Naive thymus-derived CD8-positive, alpha-beta T cell (primary cell): ENCODE measurements at regions of chr19 and their contacts with region 1.

Region 1: GRCh38 chr19:55339048-55339888 is at the start of gene KMT5C:
- DNase-seq: peak; percentile 98 to 100 (median 100)
- ATAC-seq: peak; percentile 78 to 85
- H3K4me3 Mint-ChIP-seq: peak within 1 kb of the TSS; percentile 83 to 99 (median 94)
- H3K27ac Mint-ChIP-seq: peak within 1 kb of the TSS; percentile 89 to 99 (median 97)
- H3K4me1 Mint-ChIP-seq: peaks cover 12 to 34% (median 23%) of the 10 kb centered on the region in 4 donors
- H3K27me3 Mint-ChIP-seq: peaks cover 0 to 15% (median 0%) of the 10 kb centered on the region in 5 donors
- polyA plus RNA-seq, gene KMT5C: 1.7 to 2.5 (median 2.1) TPM

Region 2: GRCh38 chr19:55258828-55259539 is 80.3 kb before region 1 on chr19 and contains the start of gene PPP6R1:
- POLR2A ChIA-PET with region 1: interaction called, 24 read pairs
- DNase-seq: peak; percentile 88 to 99 (median 94)
- ATAC-seq: peak; percentile 77 to 81
- H3K4me3 Mint-ChIP-seq: peak within 1 kb of the TSS; percentile 95 to 99 (median 98)
- H3K27ac Mint-ChIP-seq: peak within 1 kb of the TSS; percentile 98 to 100 (median 99)
- H3K4me1 Mint-ChIP-seq: peaks cover 20 to 51% (median 43%) of the 10 kb centered on the region in 4 donors
- H3K27me3 Mint-ChIP-seq: no peaks in the 10 kb centered on the region
- polyA plus RNA-seq, gene PPP6R1: 57.3 to 131 (median 60.9) TPM

Region 3: DNA sequence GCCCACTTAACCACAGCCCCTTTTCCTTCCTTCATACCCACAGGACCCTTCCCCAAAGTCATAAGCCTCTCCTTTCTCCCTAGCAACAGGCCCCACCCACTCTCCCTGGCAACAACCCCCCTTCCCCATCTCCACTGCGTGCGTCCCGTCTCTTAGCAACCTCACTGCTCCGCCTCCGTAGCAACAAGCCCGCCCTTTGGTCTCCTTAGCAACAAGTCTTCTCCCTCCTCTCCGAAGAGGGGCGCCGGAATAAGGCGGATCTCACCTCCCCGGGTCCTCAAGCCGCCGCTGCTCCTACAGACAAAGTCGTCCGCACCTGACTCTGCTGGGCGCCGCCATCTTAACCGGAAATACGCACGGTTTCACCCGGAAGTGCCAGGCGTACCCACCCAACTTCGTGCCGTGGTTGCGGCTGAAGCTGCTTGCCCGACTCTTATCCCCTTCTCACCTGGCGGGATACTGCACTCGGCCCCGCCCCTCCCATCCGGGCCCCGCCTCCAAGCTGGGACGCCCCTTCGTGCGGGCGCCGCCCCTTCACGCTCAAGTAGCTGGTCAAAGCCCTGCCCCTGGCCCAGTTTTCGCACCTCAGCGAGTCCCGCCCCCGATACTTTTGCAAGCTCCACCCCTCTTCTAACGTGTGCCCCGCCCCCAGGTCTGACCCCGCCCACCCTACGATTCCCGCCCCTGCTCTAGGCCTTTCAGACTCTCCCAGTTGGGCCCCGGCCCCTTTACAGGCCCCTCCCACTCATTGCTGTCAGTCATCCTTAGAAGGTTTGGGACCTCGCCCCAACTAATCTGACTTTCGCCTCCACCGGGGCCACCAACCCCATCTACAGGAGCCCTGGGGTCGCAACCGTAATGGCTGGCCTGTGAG is 59.3 kb before region 1 on chr19 and contains the start of gene HSPBP1:
- POLR2A ChIA-PET with region 1: interaction called, 20 read pairs
- DNase-seq: peak; percentile 91 to 97 (median 96)
- ATAC-seq: peak; percentile 88 to 89
- H3K4me3 Mint-ChIP-seq: peak within 1 kb of the TSS; percentile 96 to 100 (median 99)
- H3K27ac Mint-ChIP-seq: peak within 1 kb of the TSS; percentile 96 to 100 (median 99)
- H3K4me1 Mint-ChIP-seq: peaks cover 17 to 59% (median 39%) of the 10 kb centered on the region in 4 donors
- H3K27me3 Mint-ChIP-seq: no peaks in the 10 kb centered on the region
- polyA plus RNA-seq, gene HSPBP1: 38.6 to 44.8 (median 42.5) TPM

Region 4: GRCh38 chr19:55301459-55302317 is 37.6 kb before region 1 on chr19:
- POLR2A ChIA-PET with region 1: interaction called, 10 read pairs
- DNase-seq: peak; percentile 91 to 99 (median 94)
- ATAC-seq: peak; percentile 92 to 94
- H3K4me3 Mint-ChIP-seq: peak overlapping the region; percentile 84 to 95 (median 90)
- H3K27ac Mint-ChIP-seq: peak overlapping the region; percentile 73 to 96 (median 92)
- H3K4me1 Mint-ChIP-seq: peaks cover 5 to 14% (median 11%) of the 10 kb centered on the region in 4 donors
- H3K27me3 Mint-ChIP-seq: peaks cover 0 to 3% (median 0%) of the 10 kb centered on the region in 5 donors

Region 5: DNA sequence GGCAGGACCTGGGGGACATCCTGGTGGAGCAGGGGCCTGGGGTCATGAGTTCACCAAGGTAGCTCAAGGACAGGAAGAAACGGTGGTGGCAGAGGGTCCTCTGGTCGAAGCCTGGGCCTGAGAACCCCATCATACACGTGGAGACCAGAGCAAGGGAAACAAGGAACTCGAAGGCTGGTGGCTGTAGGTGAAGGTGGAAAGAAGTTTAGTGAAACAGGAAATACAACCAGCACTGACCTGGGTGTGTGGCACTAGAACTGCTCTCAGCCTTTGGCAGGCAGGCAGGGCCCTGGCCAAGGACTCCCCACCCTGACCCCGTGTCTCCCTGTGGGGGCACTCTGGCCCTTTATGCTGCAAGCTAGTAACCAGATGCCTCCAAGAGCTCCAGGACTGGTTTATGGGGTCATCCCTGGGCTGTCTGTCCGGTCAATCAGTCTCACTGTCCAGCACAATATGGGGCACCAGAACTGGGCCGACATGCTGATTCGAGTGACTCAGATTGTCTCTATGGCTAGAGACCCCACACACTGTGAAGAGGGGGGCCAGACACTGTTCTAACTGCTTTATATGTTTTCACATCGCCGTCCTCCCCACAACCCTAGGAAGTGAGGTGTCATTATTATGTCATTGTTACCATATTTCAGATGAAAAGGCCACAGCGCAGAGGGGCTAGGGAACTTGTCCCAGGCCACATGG is 11.5 kb after region 1 on chr19:
- POLR2A ChIA-PET with region 1: interaction called, 10 read pairs
- DNase-seq: no peak
- ATAC-seq: no peak
- H3K4me3 Mint-ChIP-seq: peak overlapping the region in 5 of 10 donors; percentile 4 to 20 (median 9)
- H3K27ac Mint-ChIP-seq: peak overlapping the region in 2 of 10 donors; percentile 74 to 79
- H3K4me1 Mint-ChIP-seq: peaks cover 20 to 36% (median 25%) of the 10 kb centered on the region in 4 donors
- H3K27me3 Mint-ChIP-seq: peaks cover 3 to 44% (median 27%) of the 10 kb centered on the region in 5 donors

Region 6: DNA sequence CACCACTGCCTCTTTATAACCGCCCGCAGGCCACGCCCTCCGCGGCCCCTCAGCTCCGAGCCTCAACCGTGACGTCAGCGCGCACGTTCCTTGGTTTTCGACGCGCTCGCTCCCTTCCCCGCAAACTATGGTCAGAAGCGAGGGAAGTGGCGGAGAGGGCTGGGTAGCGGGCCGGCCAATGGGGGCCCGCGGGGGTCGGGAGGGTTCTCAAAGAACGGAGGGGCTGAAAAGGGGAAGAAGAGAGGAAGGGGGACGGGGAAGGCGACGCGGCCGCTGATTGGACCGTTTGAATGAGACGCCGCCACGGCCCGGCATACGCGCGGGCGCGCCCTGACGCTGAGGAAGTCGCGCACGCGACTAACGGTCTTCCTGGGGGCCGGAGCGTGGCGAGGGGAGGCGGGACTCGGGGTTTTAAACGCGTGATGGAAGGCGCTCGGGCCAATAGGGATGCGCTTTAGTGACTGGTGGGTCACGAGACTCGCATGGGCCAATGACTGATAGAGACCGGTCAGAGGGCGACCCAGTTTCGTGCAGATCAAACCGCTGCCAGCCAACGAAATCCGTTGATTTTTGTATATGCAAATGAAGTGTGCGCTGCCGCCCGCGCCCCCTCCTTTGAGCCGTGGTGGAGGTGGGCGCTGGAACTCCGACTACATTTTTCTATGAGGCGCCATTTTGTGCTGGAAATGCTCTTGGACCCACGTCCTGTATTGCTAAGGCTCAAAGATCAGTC is 68.7 kb after region 1 on chr19:
- POLR2A ChIA-PET with region 1: interaction called, 21 read pairs
- DNase-seq: peak; percentile 94 to 99 (median 97)
- ATAC-seq: peak; percentile 91 to 92
- H3K4me3 Mint-ChIP-seq: peak overlapping the region; percentile 88 to 98 (median 94)
- H3K27ac Mint-ChIP-seq: peak overlapping the region; percentile 93 to 100 (median 99)
- H3K4me1 Mint-ChIP-seq: peaks cover 20 to 39% (median 30%) of the 10 kb centered on the region in 4 donors
- H3K27me3 Mint-ChIP-seq: peaks cover 0 to 3% (median 0%) of the 10 kb centered on the region in 5 donors